MCF 10A (cell line): ENCODE measurements at regions of chr12 and their contacts with region 1.

Region 1: DNA sequence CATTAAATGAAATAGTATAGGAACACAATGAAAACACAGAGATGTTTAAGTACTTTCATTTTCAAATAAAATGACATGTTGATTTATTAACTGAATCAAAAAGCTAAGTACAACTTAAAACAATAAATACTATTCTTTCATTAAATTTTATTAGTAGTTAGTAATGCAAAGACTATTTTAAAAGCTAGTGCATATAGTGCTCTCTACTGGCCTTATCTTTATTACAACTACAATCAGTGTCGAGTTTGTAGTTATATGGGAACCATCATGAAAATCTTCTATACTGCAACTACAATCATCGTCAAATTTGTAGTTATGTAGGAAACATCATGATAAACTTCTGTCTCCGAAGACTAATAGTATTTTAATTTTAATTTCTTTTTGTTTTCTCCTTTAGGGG is 8.9 kb upstream of the LIN7A start:
- DNase-seq: no peak
- H3K4me3 Mint-ChIP-seq: no peak overlapping the region
- H3K27ac Mint-ChIP-seq: no peak overlapping the region
- H3K4me1 Mint-ChIP-seq: no peaks in the 10 kb centered on the region
- H3K27me3 Mint-ChIP-seq: peaks cover 28% of the 10 kb centered on the region
- CTCF ChIP-seq: peak; percentile 5

Region 2: GRCh38 chr12:80598004-80598606 is 348.5 kb before region 1 on chr12:
- CTCF ChIA-PET with region 1: no interaction called
- POLR2A ChIA-PET with region 1: no interaction called
- intact Hi-C with region 1: no loop called
- DNase-seq: peak; percentile 61
- H3K4me3 Mint-ChIP-seq: no peak overlapping the region
- H3K27ac Mint-ChIP-seq: no peak overlapping the region
- H3K4me1 Mint-ChIP-seq: no peaks in the 10 kb centered on the region
- H3K27me3 Mint-ChIP-seq: peaks cover 30% of the 10 kb centered on the region
- CTCF ChIP-seq: peak; percentile 52

Region 3: DNA sequence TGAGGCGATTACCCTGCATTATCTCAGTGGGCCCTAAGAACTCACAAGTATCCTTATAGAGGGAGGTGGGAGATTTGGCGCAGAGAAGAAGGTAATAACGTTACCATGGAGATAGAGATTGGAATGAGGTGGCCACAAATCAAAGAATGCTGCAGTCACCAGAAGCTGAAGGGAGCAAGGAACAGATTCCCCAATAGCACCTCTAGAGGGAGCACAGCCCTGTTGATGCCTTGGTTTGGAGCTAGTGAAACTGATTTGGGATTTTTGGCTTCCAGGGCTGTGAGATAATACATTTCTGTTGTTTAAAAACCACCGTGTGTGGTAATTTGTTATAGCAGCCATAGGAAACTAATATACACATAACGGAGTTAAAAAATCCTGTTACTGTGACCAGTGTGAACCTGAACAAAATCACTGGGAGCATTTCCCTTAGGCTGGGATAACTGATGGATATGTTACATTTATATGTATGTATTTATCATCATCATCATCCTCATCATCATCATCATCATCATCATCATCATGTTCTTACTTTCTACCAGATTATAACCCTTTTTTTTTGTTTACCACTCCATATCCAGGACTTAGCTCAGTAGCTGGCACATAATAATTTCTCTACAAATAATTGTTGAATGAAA is 109.1 kb before region 1 on chr12:
- CTCF ChIA-PET with region 1: interaction called, 5 read pairs
- POLR2A ChIA-PET with region 1: no interaction called
- intact Hi-C with region 1: loop called (anchors 2 kb)
- DNase-seq: peak; percentile 61
- H3K4me3 Mint-ChIP-seq: no peak overlapping the region
- H3K27ac Mint-ChIP-seq: no peak overlapping the region
- H3K4me1 Mint-ChIP-seq: no peaks in the 10 kb centered on the region
- H3K27me3 Mint-ChIP-seq: peaks cover 60% of the 10 kb centered on the region
- CTCF ChIP-seq: peak; percentile 73